Naive thymus-derived CD4-positive, alpha-beta T cell (primary cell): ENCODE measurements at regions of chr2 and their contacts with region 1.

Region 1: GRCh38 chr2:168149150-168149974 is 98.0 kb downstream of the STK39 start:
- DNase-seq: no peak
- ATAC-seq: no peak
- H3K4me3 ChIP-seq: no peak overlapping the region
- H3K4me3 Mint-ChIP-seq: no peak overlapping the region
- H3K27ac ChIP-seq: no peak overlapping the region
- H3K27ac Mint-ChIP-seq: peak overlapping the region in 2 of 9 donors; percentile 68 to 70
- H3K4me1 ChIP-seq: no peaks in the 10 kb centered on the region
- H3K4me1 Mint-ChIP-seq: peaks cover 0 to 14% (median 8%) of the 10 kb centered on the region in 7 donors
- H3K27me3 ChIP-seq: no peaks in the 10 kb centered on the region
- H3K27me3 Mint-ChIP-seq: no peaks in the 10 kb centered on the region

Region 2: GRCh38 chr2:168712049-168712448 is 562.7 kb after region 1 on chr2:
- CTCF ChIA-PET with region 1: no interaction called
- POLR2A ChIA-PET with region 1: no interaction called
- intact Hi-C with region 1: loop called in 1 of 2 experiments (anchors 10 kb)
- DNase-seq: no peak
- ATAC-seq: peak; percentile 29
- H3K4me3 ChIP-seq: no peak overlapping the region
- H3K4me3 Mint-ChIP-seq: no peak overlapping the region
- H3K27ac ChIP-seq: no peak overlapping the region
- H3K27ac Mint-ChIP-seq: peak overlapping the region in 2 of 9 donors; percentile 52 to 61
- H3K4me1 ChIP-seq: no peaks in the 10 kb centered on the region
- H3K4me1 Mint-ChIP-seq: peaks cover under 1 to 28% (median 17%) of the 10 kb centered on the region in 7 donors
- H3K27me3 ChIP-seq: no peaks in the 10 kb centered on the region
- H3K27me3 Mint-ChIP-seq: no peaks in the 10 kb centered on the region